ENCODE measurements at regions of chr1 and their contacts with region 1.

Region 1: DNA sequence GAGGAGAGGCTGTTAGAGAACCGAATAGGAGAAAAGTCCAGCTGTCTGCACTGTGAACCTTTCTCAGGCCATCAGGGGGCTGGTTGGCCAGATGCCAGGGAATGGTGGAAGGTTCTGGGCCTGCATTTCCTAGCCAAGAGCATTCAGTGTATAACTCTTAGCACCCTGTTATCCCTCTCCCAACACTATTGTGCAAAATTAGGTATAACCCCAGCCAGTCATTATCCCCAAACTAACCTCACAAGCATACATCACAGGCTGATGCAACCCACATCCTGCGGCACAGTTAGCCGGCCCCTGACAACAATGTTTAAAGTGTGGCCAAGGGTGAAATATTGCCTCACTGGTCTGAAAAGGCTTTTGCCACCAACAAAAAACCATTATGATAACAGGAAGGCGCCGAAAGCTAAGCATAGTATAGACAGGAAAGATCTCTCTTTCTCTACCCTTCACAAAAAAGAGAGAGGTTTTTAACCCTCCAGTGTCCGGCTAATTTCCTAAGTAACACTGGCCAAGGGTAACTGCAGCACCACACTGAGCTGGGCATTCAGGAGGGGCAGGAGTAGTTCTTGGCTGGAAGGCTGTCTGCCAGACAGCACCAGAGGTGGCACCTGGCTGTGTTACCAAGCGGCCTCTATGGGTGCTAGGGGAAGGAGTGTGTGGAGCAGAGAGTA is 77.3 kb upstream of the BCAR3 start:
- DNase-seq: peak; percentile 74
- H3K4me3 Mint-ChIP-seq: no peak overlapping the region
- H3K27ac Mint-ChIP-seq: peak overlapping the region; percentile 47
- H3K4me1 Mint-ChIP-seq: peaks cover 24% of the 10 kb centered on the region
- H3K27me3 Mint-ChIP-seq: no peaks in the 10 kb centered on the region

Region 2: DNA sequence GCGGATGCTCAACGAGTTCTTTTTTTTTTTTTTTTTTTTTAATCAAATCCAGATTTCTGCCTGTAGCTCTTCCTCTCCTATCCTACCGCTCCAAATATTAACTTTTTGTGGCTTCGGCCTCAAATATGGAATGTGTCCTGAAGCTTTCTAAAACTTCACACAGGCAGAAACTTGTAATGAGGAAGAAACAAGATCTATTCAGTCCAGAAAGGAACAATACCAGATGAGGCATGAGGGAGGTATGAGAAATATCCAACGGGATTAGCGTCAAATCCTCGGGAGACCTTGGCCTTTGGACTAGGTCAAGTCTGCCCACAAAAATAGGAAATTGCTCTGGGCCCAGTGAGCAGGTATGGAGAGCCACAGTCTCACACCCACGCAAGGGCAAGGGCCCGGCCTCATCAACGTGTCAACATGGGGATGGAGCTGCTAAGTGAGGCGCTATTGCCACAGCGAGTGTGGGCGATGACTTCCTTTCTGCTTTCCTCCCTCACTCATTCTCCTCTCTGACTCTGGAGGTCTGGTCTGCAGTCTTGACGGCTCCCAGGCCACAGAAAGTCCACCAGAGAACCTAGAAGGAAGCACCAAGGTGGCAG is 143.9 kb before region 1 on chr1:
- intact Hi-C with region 1: no loop called
- DNase-seq: peak; percentile 63
- H3K4me3 Mint-ChIP-seq: peak overlapping the region; percentile 30
- H3K27ac Mint-ChIP-seq: peak overlapping the region; percentile 84
- H3K4me1 Mint-ChIP-seq: peaks cover 17% of the 10 kb centered on the region
- H3K27me3 Mint-ChIP-seq: peaks cover 43% of the 10 kb centered on the region

Region 3: DNA sequence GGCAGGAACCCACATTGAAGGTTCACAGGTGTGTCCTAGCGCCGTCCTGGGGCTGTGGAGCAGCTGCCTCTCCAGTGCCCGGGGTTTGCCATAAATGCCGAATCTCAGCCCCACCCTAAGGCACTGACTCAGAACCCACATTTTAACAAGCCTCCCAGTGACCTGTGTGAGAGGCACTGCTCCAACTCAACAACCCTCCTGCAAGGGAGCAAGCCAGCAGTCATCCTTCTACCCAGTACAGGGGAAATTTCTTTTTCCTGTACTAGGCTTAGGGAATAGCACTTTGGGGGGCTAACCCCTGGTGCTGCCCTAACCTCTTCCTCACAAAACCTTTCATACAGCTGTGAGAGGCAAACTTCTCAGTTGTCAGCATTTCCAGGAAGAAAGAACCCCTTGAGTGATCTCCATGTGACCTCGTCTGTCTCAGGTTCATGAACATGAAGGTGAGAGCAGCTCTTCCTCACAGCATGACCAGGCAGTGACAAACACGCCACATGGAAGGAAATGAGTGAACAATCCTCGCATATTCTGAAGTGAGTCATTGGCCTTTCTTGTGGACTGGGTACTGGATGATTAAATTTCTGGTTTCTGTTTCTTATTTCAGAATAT is 65.9 kb before region 1 on chr1:
- intact Hi-C with region 1: no loop called
- DNase-seq: peak; percentile 79
- H3K4me3 Mint-ChIP-seq: peak overlapping the region; percentile 37
- H3K27ac Mint-ChIP-seq: peak overlapping the region; percentile 81
- H3K4me1 Mint-ChIP-seq: peaks cover 11% of the 10 kb centered on the region
- H3K27me3 Mint-ChIP-seq: peaks cover 9% of the 10 kb centered on the region

Region 4: DNA sequence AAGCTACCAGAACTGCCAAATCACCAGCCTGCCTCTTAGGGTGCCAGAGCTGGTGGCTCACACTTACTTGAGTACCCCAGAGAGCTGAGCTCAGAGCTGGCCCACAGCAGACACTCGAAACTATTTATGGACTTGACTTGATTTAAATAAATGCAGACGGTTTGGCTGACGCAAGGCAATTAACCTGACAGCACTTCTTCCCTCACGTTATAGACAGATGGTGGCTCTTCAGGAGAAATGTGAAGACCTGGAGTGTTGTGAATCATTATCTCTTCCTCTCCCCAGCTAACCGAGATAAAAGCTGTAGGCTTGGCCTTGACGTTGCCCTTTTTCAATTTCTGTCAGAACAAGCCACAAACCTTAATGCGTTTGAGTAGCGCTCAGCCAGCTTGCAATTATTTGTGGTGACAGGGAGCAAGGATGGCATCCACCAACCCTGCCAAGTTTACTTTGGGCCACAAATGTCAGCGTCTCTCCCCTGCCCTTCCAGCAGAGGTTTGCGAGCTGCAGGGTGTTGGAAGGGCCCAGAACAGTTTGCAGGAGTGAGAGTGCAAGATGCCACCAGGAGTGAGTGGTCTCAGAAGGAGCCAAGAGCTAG is 43.4 kb before region 1 on chr1:
- intact Hi-C with region 1: loop called (anchors 5 kb)
- DNase-seq: peak; percentile 70
- H3K4me3 Mint-ChIP-seq: peak overlapping the region; percentile 39
- H3K27ac Mint-ChIP-seq: peak overlapping the region; percentile 72
- H3K4me1 Mint-ChIP-seq: peaks cover 46% of the 10 kb centered on the region
- H3K27me3 Mint-ChIP-seq: peaks cover 7% of the 10 kb centered on the region